Activated CD4-positive, alpha-beta T cell treated with anti-CD3 and anti-CD28 coated beads, Interleukin-2, amount 10 ng/mL, durations not matched to agents 7 days and 5 days (primary cell): ENCODE measurements at regions of chr2 and their contacts with region 1.

Region 1: GRCh38 chr2:27428213-27428977 is at the start of gene NRBP1:
- DNase-seq: peak; percentile 94
- H3K4me3 Mint-ChIP-seq: peak within 1 kb of the TSS; percentile 99
- H3K27ac Mint-ChIP-seq: peak within 1 kb of the TSS; percentile 99
- H3K4me1 Mint-ChIP-seq: peaks cover 37% of the 10 kb centered on the region
- H3K27me3 Mint-ChIP-seq: peaks cover 3% of the 10 kb centered on the region
- total RNA-seq, gene NRBP1: 77.1 to 82.3 TPM

Region 2: DNA sequence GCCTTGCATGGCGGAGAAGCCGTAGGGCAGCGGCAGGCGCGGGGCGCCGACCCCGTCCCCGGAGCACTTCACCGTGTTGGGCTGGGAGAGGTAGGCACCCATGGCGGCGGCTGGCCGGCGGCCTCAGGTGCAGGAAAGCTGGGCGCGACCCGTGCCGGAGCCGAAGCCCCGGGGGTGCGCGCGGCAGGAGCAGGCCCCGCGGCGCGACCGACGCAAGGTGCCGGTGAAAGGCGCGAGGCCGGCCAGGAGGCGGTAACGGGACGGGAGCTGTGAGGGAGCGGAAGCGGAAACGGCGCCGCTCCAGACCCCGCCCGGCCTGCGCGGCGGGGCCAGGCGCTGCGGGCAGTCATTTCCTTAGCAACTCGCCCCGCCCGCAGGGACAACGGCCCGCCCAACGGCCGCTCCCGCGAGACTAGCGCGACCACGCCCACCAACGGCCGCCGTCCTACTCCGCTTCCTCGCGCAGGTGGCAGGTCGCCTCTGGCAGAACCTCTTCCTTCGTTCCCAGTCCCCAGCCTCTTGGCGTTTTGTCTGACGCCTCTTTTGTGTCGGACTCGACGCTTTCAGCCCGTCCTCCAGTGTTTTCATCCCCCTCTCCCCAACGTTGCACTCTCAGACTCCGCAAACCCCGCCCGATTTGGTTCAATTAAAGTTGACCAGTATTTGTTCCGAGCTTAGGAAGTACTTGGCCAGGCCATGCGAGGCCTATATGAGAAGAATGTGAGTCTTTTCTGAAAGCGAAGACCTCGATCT is 18.9 kb before region 1 on chr2 and contains the start of gene PPM1G:
- CTCF ChIA-PET with region 1: interaction called, 12 read pairs
- POLR2A ChIA-PET with region 1: interaction called, 5 read pairs
- DNase-seq: peak; percentile 96
- H3K4me3 Mint-ChIP-seq: peak within 1 kb of the TSS; percentile 82
- H3K27ac Mint-ChIP-seq: peak within 1 kb of the TSS; percentile 92
- H3K4me1 Mint-ChIP-seq: peaks cover 36% of the 10 kb centered on the region
- H3K27me3 Mint-ChIP-seq: peaks cover 6% of the 10 kb centered on the region
- total RNA-seq, gene PPM1G: 109 TPM